ENCODE measurements at regions of chr1 and their contacts with region 1.

Region 1: DNA sequence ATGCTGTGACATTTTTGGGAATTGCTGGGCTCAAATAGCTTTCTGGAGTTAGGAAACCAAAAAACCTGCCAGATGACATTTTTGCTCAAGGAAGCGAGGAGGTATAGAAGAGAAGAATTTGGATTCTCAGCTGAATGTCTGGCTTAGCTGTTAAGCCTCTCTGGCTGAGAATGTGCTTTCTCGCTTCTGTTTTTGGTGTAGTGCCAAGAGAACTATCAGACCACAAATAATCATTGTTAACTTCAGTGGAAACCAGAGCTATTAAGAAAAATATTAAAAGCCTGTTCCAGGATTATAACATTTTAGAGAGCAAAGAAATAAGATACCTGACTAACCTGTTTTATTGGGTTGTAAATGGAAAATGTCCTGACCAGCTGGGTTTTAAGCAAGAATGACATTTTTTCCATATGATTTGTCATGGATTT is 39.5 kb upstream of the DIPK1A start:
- DNase-seq: no peak
- H3K4me3 Mint-ChIP-seq: no peak overlapping the region
- H3K27ac Mint-ChIP-seq: no peak overlapping the region
- H3K4me1 Mint-ChIP-seq: peaks cover 3% of the 10 kb centered on the region
- H3K27me3 Mint-ChIP-seq: no peaks in the 10 kb centered on the region

Region 2: GRCh38 chr1:92968138-92969032 is 32.4 kb before region 1 on chr1:
- CTCF ChIA-PET with region 1: interaction called, 12 read pairs
- intact Hi-C with region 1: no loop called
- DNase-seq: peak; percentile 49
- H3K4me3 Mint-ChIP-seq: no peak overlapping the region
- H3K27ac Mint-ChIP-seq: no peak overlapping the region
- H3K4me1 Mint-ChIP-seq: peaks cover 30% of the 10 kb centered on the region
- H3K27me3 Mint-ChIP-seq: no peaks in the 10 kb centered on the region